Panc1 (cell line): ENCODE measurements at regions of chr16 and their contacts with region 1.

Region 1: GRCh38 chr16:67663151-67663876 is 2.6 kb downstream of the PARD6A start:
- DNase-seq: no peak
- ATAC-seq: no peak
- H3K4me3 ChIP-seq: no peak overlapping the region
- H3K27ac ChIP-seq: no peak overlapping the region
- H3K4me1 ChIP-seq: peaks cover 16% of the 10 kb centered on the region
- H3K27me3 ChIP-seq: no peaks in the 10 kb centered on the region
- CTCF ChIP-seq: peak; percentile 52; the same call in 1 of the 2 replicates

Region 2: DNA sequence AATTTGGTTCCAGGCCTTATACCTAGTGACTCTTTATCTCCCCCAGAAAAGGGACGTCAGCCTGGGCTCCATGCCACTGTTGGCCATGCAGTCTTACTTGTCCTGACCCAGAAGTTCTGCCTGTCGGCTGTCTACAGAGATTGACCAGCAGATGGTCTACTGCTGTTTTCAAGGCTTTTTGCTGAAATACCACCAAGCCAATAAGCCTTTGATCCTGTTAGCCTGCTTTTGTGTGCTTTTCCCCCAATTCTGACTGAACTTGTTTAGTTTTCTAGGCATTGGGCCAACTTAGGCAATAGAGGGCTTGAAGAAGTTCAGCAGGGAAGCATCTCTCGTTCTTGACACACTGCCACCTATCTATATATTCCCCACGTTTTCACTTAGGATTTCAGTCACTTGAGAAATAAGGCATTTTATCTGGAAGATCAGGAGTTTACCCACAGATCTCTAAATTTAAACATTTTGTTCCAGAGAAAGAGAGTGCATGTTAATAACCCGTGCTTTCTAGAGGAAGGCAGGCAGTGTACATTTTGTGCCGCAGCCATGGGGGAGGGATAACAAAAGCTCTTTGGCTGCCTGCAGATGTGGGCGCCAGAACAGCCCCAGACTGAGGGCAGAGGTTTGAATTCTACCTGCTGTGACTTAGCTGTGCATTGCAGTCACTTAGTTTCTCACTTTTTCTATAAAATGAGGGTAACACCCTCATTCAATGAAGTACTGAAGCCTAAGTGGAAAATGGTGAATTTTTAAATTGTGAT is 30.7 kb before region 1 on chr16:
- CTCF ChIA-PET with region 1: interaction called, 15 read pairs
- POLR2A ChIA-PET with region 1: interaction called, 3 read pairs
- in situ Hi-C with region 1: no loop called
- intact Hi-C with region 1: no loop called
- DNase-seq: no peak
- ATAC-seq: no peak
- H3K4me3 ChIP-seq: no peak overlapping the region
- H3K27ac ChIP-seq: no peak overlapping the region
- H3K4me1 ChIP-seq: no peaks in the 10 kb centered on the region
- H3K27me3 ChIP-seq: no peaks in the 10 kb centered on the region
- CTCF ChIP-seq: no peak

Region 3: DNA sequence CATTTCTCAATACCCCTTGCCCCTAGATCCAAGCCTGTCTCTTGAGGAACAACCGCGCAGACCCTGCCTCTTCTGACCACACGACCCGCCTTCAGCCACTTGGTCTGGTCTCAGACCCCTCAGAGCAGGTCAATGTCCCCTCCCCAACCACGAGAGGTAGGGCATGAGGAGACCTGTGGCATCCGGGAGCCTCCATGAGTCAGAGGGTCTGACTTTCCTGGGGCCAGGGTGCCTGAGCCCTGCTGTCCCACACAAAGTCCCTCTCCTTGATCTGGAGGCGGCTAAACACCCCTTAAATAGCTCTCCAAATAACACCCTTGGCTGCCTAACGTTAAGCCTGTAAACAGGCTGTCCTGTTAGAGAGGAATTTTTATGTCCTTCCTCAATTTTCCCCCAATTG is 13.3 kb before region 1 on chr16:
- CTCF ChIA-PET with region 1: no interaction called
- POLR2A ChIA-PET with region 1: no interaction called
- in situ Hi-C with region 1: no loop called
- intact Hi-C with region 1: no loop called
- DNase-seq: no peak
- ATAC-seq: no peak
- H3K4me3 ChIP-seq: no peak overlapping the region
- H3K27ac ChIP-seq: no peak overlapping the region
- H3K4me1 ChIP-seq: no peaks in the 10 kb centered on the region
- H3K27me3 ChIP-seq: no peaks in the 10 kb centered on the region
- CTCF ChIP-seq: no peak

Region 4: DNA sequence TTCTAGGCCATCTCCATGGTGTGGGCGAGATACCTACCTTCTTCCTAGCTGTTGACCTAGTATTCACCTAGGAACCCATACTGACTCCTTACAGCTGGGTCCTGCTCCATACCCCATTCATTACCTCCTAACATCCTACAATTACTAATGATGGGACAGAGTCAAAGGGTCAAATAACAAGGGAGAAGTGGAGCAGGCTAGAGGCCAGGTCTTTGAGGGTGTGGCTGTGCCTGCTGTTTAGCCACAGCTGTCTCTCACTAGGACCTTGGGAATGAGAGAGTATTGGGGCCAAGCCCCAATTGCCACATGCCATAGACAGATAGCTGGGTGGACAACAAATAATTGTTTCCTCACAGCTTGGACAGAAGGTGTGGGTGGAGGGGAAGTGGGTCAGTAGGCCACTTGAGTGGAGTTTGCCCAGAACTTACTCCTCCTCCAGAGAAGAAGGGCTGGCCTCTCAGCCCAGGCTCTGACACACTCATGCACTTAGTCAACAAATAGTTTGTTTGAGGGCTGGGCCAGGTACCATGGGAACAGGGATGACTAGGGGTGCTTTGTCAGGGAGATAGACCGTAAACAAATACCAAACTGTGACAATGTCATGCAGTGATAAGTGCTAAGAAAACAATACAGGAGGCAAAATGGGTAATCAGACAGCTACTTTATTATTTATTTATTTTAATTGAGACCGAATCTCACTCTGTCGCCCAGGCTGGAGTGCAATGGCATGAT is 194.4 kb after region 1 on chr16:
- CTCF ChIA-PET with region 1: no interaction called
- POLR2A ChIA-PET with region 1: no interaction called
- in situ Hi-C with region 1: no loop called
- intact Hi-C with region 1: no loop called
- DNase-seq: peak; percentile 78
- ATAC-seq: peak; percentile 86
- H3K4me3 ChIP-seq: no peak overlapping the region
- H3K27ac ChIP-seq: no peak overlapping the region
- H3K4me1 ChIP-seq: peaks cover 15% of the 10 kb centered on the region
- H3K27me3 ChIP-seq: no peaks in the 10 kb centered on the region
- CTCF ChIP-seq: no peak